ENCODE measurements at regions of chr9 and their contacts with region 1.

Region 1: DNA sequence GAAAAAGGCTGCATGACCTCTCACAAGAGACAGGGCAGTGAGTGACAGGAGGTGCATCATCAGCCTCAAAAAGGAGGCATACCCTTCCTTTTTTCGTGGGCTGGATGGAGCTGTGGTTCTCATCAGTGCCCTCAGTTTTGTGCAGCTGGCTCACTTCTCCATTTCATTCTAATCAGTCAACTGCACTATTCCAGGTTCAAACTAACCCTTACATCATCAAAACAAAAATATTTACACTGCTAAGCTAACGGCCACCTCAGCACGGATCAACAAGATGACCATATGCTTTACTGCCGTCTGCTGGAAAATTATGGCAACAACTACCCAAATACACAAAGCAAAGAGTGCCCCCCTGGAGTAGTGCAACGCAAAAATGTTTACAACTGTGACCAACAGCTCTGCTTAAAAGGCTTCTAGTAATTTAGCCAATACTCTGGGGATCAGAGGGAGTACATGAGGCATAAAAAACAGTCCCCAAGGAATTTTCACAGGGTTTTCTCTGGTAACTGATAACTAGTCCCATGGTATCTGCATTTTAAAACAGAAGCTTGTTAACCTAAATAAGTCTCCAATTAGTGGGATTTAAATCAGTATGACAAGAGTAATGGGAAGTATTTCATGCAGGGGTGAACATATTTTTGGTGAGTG is 10.8 kb downstream of the KCNV2 start:
- DNase-seq: no peak
- ATAC-seq: no peak
- H3K4me3 Mint-ChIP-seq: no peak overlapping the region
- H3K27ac Mint-ChIP-seq: no peak overlapping the region
- H3K4me1 Mint-ChIP-seq: no peaks in the 10 kb centered on the region
- H3K27me3 Mint-ChIP-seq: no peaks in the 10 kb centered on the region

Region 2: GRCh38 chr9:2317601-2318000 is 410.5 kb before region 1 on chr9:
- CTCF ChIA-PET with region 1: no interaction called
- POLR2A ChIA-PET with region 1: no interaction called
- intact Hi-C with region 1: no loop called
- DNase-seq: no peak
- ATAC-seq: no peak
- H3K4me3 Mint-ChIP-seq: no peak overlapping the region
- H3K27ac Mint-ChIP-seq: no peak overlapping the region
- H3K4me1 Mint-ChIP-seq: no peaks in the 10 kb centered on the region
- H3K27me3 Mint-ChIP-seq: peaks cover 2% of the 10 kb centered on the region

Region 3: DNA sequence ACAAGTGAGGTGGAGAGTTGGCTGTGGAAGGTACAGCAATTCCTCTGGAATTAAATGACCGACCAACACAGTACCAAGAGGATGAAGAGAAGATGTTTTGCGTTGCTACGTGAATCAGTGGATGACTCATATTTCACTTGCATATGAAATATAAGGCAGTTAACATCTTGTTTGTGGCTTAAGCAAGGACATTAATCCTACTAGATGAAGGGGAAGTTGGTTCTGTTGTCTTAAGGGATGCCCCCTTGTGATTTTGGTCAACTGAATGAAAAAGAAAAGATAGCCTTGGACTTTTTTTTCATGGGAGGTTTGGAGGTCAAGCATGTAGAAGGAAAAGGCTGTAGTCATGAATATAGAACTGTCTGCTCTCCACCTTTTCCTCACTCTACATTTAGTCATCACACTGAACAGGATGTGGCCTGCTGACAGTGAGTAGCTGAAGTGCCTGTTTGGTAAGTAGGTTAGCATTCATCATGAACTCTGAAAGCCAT is 72.6 kb before region 1 on chr9:
- CTCF ChIA-PET with region 1: no interaction called
- POLR2A ChIA-PET with region 1: no interaction called
- intact Hi-C with region 1: loop called in 1 of 2 experiments (anchors 2 kb)
- DNase-seq: peak; percentile 61
- ATAC-seq: peak; percentile 97
- H3K4me3 Mint-ChIP-seq: peak overlapping the region; percentile 3
- H3K27ac Mint-ChIP-seq: peak overlapping the region; percentile 80
- H3K4me1 Mint-ChIP-seq: peaks cover 20% of the 10 kb centered on the region
- H3K27me3 Mint-ChIP-seq: no peaks in the 10 kb centered on the region

Measured in activated CD4-positive, alpha-beta T cell treated with anti-CD3 and anti-CD28 coated beads for 36 hours (primary cell).